Cardiac septum (tissue), 1 donor: ENCODE measurements at regions of chr19 and their contacts with region 1.

Region 1: DNA sequence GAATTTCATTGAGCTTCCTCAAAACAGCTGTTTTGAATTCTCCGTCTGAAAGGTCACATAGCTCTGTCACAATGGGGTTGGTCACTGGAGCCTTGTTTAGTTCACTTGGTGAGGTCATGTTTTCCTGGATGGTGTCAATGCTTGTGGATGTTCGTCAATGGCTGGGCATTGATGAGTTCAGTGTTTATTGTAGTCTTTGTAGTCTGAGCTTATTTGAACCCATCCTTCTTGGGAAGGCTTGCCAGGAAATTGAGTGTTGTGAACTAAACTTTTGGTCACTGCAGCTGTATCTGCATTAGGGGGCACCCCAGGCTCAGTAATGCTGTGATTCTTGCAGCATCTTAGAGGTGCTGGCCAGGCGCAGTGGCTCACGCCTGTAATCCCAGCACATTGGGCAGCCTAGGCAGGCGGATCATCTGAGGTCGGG is 22.0 kb downstream of the BLOC1S3 start:
- DNase-seq: no peak

Region 2: GRCh38 chr19:45001087-45001739 is 199.4 kb before region 1 on chr19 and contains the start of gene RELB:
- intact Hi-C with region 1: no loop called
- DNase-seq: peak; percentile 95
- total RNA-seq, gene RELB: 9.0 TPM

Region 3: DNA sequence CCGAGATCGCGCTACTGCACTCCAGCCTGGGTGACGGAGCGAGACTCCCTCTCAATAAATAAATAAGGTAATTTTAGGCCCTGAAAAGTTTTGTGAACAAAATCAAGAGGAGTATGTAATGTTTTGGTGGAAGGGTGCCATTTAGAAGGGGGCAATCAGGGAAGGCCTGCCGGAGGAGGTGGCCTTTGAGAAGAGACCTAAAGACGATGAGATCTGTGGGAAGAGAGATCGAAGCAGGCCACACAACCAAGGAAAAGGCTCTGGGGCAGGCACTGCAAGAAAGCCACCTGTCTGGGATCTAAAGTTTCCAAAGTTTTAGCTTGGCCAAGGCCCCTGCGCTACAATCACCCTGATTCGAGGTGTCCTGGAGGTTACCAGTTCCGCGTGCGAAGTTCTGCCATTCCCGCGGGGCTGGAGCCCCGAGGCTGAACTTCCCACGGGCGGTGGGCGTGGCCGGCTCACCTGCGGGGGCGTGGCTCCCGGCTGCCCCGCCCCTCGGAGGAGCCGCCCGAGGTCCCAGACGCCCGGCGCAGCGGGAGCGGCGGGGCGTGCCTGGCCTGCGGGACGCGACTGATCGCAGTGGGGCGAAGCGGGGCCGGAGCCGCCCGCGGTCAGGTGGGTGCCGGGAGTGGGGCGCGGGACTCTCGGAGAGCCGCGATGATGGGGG is 139.8 kb after region 1 on chr19 and contains the start of gene KLC3:
- intact Hi-C with region 1: loop called (anchors 10 kb)
- DNase-seq: no peak
- total RNA-seq, gene KLC3: not detected